ENCODE measurements at regions of chr7 and their contacts with region 1.

Region 1: GRCh38 chr7:132805766-132806165 is 229.5 kb upstream of the PLXNA4 start:
- DNase-seq: no peak
- ATAC-seq: no peak
- H3K4me3 ChIP-seq: no peak overlapping the region
- H3K4me3 Mint-ChIP-seq: no peak overlapping the region
- H3K27ac ChIP-seq: no peak overlapping the region
- H3K27ac Mint-ChIP-seq: no peak overlapping the region
- H3K4me1 ChIP-seq: peaks cover 0 to 9% of the 10 kb centered on the region in 2 experiments
- H3K4me1 Mint-ChIP-seq: peaks cover 0 to under 1% (median 0%) of the 10 kb centered on the region in 3 donors
- H3K27me3 ChIP-seq: no peaks in the 10 kb centered on the region
- H3K27me3 Mint-ChIP-seq: no peaks in the 10 kb centered on the region

Region 2: GRCh38 chr7:132410385-132410784 is 395.4 kb before region 1 on chr7:
- CTCF ChIA-PET with region 1: no interaction called
- POLR2A ChIA-PET with region 1: interaction called in 1 of 2 experiments, 11 read pairs
- DNase-seq: no peak
- ATAC-seq: no peak
- H3K4me3 ChIP-seq: no peak overlapping the region
- H3K4me3 Mint-ChIP-seq: no peak overlapping the region
- H3K27ac ChIP-seq: no peak overlapping the region
- H3K27ac Mint-ChIP-seq: no peak overlapping the region
- H3K4me1 ChIP-seq: peaks cover 0 to 5% of the 10 kb centered on the region in 2 experiments
- H3K4me1 Mint-ChIP-seq: peaks cover 0 to 8% (median 0%) of the 10 kb centered on the region in 3 donors
- H3K27me3 ChIP-seq: peaks cover 0 to 4% of the 10 kb centered on the region in 2 experiments
- H3K27me3 Mint-ChIP-seq: peaks cover 0 to 5% of the 10 kb centered on the region in 2 donors

Region 3: GRCh38 chr7:132919771-132920170 is 114.0 kb after region 1 on chr7:
- CTCF ChIA-PET with region 1: no interaction called
- POLR2A ChIA-PET with region 1: no interaction called
- DNase-seq: no peak
- ATAC-seq: no peak
- H3K4me3 ChIP-seq: no peak overlapping the region
- H3K4me3 Mint-ChIP-seq: no peak overlapping the region
- H3K27ac ChIP-seq: no peak overlapping the region
- H3K27ac Mint-ChIP-seq: no peak overlapping the region
- H3K4me1 ChIP-seq: no peaks in the 10 kb centered on the region
- H3K4me1 Mint-ChIP-seq: peaks cover 0 to 4% (median 0%) of the 10 kb centered on the region in 3 donors
- H3K27me3 ChIP-seq: no peaks in the 10 kb centered on the region
- H3K27me3 Mint-ChIP-seq: no peaks in the 10 kb centered on the region

Measured in T-cell (primary cell).